ENCODE measurements at regions of chr2 and their contacts with region 1.

Region 1: DNA sequence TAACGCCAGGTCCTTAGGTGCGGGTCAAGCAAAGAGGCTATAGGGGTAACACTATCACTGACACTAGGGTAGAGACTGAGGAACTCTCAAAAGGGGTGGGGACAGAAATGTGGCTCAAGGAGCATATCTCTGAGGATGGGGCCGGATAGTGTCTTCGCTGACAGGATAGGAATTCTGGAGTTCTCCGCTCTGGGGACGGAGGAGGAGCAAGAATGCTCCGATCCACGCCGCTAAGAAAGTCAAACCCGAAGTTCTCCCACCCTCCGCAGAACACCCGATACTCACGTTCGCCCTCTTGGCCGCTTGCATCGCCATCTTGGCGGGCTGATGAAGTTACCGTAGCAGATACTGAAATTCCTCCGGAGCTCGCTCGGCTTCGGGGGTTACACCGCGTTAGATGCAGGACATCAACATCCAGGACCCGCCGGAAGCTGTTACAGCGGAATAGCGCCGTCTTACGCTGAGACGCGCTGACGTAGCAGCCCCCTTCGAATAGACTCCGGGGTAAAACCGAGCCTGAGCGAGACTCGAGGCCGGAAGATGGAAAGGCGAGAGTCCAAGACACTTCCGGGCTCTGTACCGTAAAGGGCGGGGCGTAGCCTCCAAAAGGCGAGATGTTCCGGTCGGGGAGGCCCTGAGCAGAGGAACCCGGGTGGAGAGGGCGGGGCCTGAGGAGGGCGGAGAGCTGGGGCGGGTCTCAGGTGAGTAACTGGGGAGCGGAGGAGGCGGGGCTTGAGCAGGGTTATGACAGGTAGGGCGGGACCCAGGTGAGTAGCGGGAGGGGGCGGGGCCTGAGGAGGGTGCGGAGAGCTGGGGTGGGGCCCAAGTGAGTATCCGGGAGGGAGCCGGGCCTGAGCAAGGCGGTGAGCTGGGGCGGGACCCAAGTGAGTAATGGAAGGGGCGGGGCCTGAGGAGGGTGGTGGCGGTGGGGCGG is at the start of gene SF3B6:
- DNase-seq: peak; percentile 96 to 97
- ATAC-seq: peak; percentile 95 to 98 (median 97)
- H3K4me3 ChIP-seq: peak within 1 kb of the TSS; percentile 55 to 92 (median 76)
- H3K27ac ChIP-seq: peak within 1 kb of the TSS; percentile 19 to 90 (median 84)
- H3K4me1 ChIP-seq: peaks cover 5 to 24% (median 20%) of the 10 kb centered on the region in 9 donors
- H3K27me3 ChIP-seq: no peaks in the 10 kb centered on the region
- CTCF ChIP-seq: no peak
- total RNA-seq, gene SF3B6: 52.9 to 64.6 (median 57.4) TPM

Region 2: DNA sequence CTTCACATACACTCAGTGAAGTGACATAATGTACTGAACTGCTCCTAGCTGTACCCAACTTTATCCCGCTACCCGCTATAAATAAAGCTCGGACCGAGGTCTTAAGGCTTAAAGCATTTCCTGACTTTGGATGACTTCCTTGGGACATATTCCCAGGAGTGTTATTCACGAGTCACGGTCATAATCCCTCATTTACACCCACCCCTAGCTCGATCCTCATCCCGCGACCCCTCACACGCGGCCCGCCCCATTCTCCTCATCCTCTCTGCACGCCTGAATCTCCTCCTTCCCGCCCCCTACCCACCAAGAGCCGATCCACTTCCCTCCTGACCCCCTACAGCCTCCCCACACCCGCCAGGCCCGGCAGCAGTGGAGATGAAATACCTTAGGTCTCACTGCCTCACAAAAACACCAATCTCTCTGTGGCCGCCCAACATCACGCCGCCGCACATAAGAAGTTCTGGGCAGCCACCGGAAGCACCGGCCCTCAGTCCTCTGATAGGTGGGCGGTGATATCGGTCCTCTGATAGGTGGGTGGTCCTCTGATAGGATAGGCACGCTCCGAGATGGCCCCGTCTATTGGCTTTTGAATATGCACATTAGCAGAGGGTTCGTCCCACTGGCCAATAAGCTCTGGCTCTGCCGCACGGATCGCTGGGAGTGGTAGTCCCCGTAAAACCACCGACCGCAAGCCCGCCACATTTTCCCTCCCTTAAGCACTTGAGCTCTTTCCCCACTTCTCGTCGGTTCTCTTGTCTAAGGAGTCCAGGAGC is 29.1 kb before region 1 on chr2 and contains the start of gene WDCP:
- intact Hi-C with region 1: loop called in 2 of 10 experiments (anchors 2 to 5 kb)
- DNase-seq: peak; percentile 89 to 97
- ATAC-seq: peak; percentile 99 to 100 (median 99)
- H3K4me3 ChIP-seq: peak within 1 kb of the TSS; percentile 39 to 87 (median 74)
- H3K27ac ChIP-seq: peak within 1 kb of the TSS in 9 of 10 donors; percentile 47 to 87 (median 71)
- H3K4me1 ChIP-seq: peaks cover 0 to 38% (median 29%) of the 10 kb centered on the region in 9 donors
- H3K27me3 ChIP-seq: peaks cover 0 to 22% (median 0%) of the 10 kb centered on the region in 7 donors
- CTCF ChIP-seq: no peak
- total RNA-seq, gene WDCP: 4.8 to 10.1 (median 6.2) TPM

Region 3: DNA sequence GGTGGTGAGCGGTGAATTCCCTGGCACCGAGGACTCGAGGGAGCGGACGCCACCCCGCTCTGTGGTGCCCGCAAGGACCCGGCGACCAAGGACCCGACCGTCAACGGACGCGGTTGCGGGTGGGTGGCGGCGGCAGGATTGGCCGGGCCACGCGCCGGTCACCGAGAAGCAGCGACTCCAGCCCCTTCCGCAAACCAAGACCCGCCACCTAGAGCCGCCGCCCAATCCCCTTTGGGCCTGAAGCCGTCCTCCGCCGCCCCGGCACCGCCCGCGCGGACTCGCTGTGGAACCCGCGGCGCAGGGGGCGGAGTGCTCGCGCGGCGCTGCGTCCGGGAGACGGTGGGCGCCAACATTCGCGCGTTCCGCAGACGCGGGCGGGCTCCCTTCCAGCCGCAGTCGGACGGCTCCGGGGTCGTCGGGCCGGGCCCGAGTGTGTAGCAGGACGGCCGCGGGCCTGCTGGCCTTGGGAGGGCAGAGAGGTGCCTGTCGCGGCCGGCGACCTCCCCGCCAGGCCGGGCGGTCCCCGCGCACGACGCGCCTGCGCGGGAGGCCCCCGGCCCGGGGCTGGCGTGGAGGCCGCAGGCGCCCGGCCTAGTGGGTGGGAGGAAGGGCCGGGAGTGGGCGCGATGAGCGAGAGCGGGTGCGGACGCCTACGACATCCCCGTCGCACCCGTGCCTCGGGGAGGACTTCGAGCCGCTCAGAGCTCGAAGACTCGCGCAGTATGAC is 47.2 kb after region 1 on chr2 and contains the starts of genes FAM228B and PFN4:
- intact Hi-C with region 1: loop called in 2 of 10 experiments (anchors 5 kb)
- DNase-seq: peak; percentile 92
- ATAC-seq: peak; percentile 97 to 99 (median 98)
- H3K4me3 ChIP-seq: peak within 1 kb of the TSS; percentile 64 to 82 (median 76)
- H3K27ac ChIP-seq: peak within 1 kb of the TSS; percentile 86 to 98 (median 94)
- H3K4me1 ChIP-seq: peaks cover 0 to 24% (median 14%) of the 10 kb centered on the region in 9 donors
- H3K27me3 ChIP-seq: no peaks in the 10 kb centered on the region
- CTCF ChIP-seq: peak in 1 of 9 donors; percentile 14
- total RNA-seq, gene FAM228B: 21.6 to 35.4 (median 27.3) TPM
- total RNA-seq, gene PFN4: 0.35 to 1.6 (median 0.78) TPM in 8 of 10 donors, not detected in the others